ENCODE measurements at regions of chr18 and their contacts with region 1.

Region 1: DNA sequence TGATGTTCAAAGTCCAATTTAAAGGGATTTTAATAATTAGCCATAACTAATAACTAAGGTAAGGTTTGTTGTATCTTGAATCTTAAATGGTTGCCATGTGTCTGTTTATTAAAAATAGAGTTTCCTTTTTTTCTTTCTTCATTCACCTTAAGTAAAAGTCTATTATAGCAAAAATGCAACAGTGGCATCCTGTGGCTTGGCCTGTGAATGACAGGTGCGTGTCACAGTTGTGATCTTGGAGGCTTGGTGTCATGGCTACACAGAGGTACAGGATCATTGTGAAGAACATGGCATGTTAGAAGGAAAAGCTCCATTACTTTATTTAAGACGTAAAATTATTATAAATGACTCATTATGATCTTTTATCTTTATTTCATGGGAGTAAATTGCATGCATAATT is 246.1 kb downstream of the BCL2 start:
- DNase-seq: no peak
- H3K4me3 ChIP-seq: no peak overlapping the region
- H3K27ac ChIP-seq: no peak overlapping the region
- H3K4me1 ChIP-seq: peaks cover 14% of the 10 kb centered on the region
- H3K27me3 ChIP-seq: no peaks in the 10 kb centered on the region
- CTCF ChIP-seq: peak in 1 of 2 donors; percentile 40

Region 2: GRCh38 chr18:62725896-62726295 is 347.6 kb before region 1 on chr18:
- CTCF ChIA-PET with region 1: interaction called, 15 read pairs
- dilution Hi-C with region 1: no loop called
- in situ Hi-C with region 1: no loop called
- intact Hi-C with region 1: no loop called
- DNase-seq: no peak
- H3K4me3 ChIP-seq: no peak overlapping the region
- H3K27ac ChIP-seq: no peak overlapping the region
- H3K4me1 ChIP-seq: no peaks in the 10 kb centered on the region
- H3K27me3 ChIP-seq: no peaks in the 10 kb centered on the region
- CTCF ChIP-seq: no peak

Region 3: DNA sequence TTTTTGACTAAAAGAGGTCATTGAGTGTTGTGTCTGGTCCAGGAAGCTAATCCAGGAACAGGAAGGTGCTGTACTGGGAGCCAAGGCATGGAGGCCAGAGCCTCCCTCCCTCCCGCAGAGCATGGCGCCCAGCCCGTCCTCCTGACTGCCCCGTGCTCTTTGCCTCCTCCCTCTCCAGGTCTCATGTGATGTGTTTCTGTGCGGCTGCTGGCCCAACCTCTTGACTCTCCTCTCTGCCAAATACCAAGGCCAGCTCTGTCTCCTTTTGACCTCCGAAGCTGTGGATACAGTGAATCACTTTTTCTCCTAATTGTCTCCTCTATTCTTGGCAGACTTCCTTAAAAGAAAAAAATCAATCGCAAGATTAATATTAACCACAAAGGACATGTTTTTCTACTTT is 74.1 kb before region 1 on chr18:
- CTCF ChIA-PET with region 1: no interaction called
- dilution Hi-C with region 1: no loop called
- in situ Hi-C with region 1: no loop called
- intact Hi-C with region 1: no loop called
- DNase-seq: no peak
- H3K4me3 ChIP-seq: no peak overlapping the region
- H3K27ac ChIP-seq: no peak overlapping the region
- H3K4me1 ChIP-seq: no peaks in the 10 kb centered on the region
- H3K27me3 ChIP-seq: peaks cover 4% of the 10 kb centered on the region
- CTCF ChIP-seq: no peak

Region 4: GRCh38 chr18:63025251-63026090 is 48.0 kb before region 1 on chr18:
- CTCF ChIA-PET with region 1: no interaction called
- dilution Hi-C with region 1: no loop called
- in situ Hi-C with region 1: no loop called
- intact Hi-C with region 1: loop called (anchors 1 kb)
- DNase-seq: peak; percentile 3
- H3K4me3 ChIP-seq: no peak overlapping the region
- H3K27ac ChIP-seq: no peak overlapping the region
- H3K4me1 ChIP-seq: no peaks in the 10 kb centered on the region
- H3K27me3 ChIP-seq: no peaks in the 10 kb centered on the region
- CTCF ChIP-seq: peak; percentile 45 to 50

Region 5: GRCh38 chr18:63175264-63175663 is 101.8 kb after region 1 on chr18:
- CTCF ChIA-PET with region 1: no interaction called
- dilution Hi-C with region 1: no loop called
- in situ Hi-C with region 1: no loop called
- intact Hi-C with region 1: no loop called
- DNase-seq: no peak
- H3K4me3 ChIP-seq: no peak overlapping the region
- H3K27ac ChIP-seq: no peak overlapping the region
- H3K4me1 ChIP-seq: no peaks in the 10 kb centered on the region
- H3K27me3 ChIP-seq: peaks cover 4% of the 10 kb centered on the region
- CTCF ChIP-seq: no peak

Region 6: GRCh38 chr18:63192885-63193349 is 119.4 kb after region 1 on chr18:
- CTCF ChIA-PET with region 1: no interaction called
- dilution Hi-C with region 1: no loop called
- in situ Hi-C with region 1: no loop called
- intact Hi-C with region 1: no loop called
- DNase-seq: no peak
- H3K4me3 ChIP-seq: no peak overlapping the region
- H3K27ac ChIP-seq: no peak overlapping the region
- H3K4me1 ChIP-seq: no peaks in the 10 kb centered on the region
- H3K27me3 ChIP-seq: peaks cover 1% of the 10 kb centered on the region
- CTCF ChIP-seq: no peak

Region 7: GRCh38 chr18:63216516-63217311 is 143.2 kb after region 1 on chr18:
- CTCF ChIA-PET with region 1: no interaction called
- dilution Hi-C with region 1: no loop called
- in situ Hi-C with region 1: no loop called
- intact Hi-C with region 1: no loop called
- DNase-seq: no peak
- H3K4me3 ChIP-seq: no peak overlapping the region
- H3K27ac ChIP-seq: no peak overlapping the region
- H3K4me1 ChIP-seq: no peaks in the 10 kb centered on the region
- H3K27me3 ChIP-seq: no peaks in the 10 kb centered on the region
- CTCF ChIP-seq: no peak

Measured in mammary epithelial cell (primary cell).